Calu3 (cell line): ENCODE measurements at regions of chr3 and their contacts with region 1.

Region 1: GRCh38 chr3:24237971-24238767 is 256.5 kb downstream of the THRB start:
- DNase-seq: peak; percentile 70
- H3K4me3 Mint-ChIP-seq: no peak overlapping the region
- H3K27ac Mint-ChIP-seq: peak overlapping the region; percentile 0
- H3K4me1 Mint-ChIP-seq: peaks cover 35% of the 10 kb centered on the region
- H3K27me3 Mint-ChIP-seq: no peaks in the 10 kb centered on the region
- CTCF ChIP-seq: peak; percentile 58

Region 2: DNA sequence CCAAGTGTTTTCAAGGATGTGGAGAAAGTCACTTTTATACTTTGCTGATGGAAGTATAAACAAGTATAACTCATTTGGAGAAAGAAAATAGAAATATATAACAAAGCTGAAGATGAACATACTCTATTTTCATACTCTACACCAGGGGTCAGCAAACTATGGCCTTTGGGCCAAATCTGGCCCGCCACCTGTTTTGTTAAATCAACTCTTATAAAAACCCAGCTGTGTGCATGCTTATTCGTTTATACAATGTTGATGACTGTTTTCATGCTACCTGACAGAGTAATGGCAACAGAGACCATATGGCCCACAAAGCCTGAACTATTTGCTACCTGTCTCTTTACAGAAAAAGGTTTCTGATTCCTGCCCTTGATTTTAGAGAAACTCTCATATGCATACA is 169.1 kb before region 1 on chr3:
- CTCF ChIA-PET with region 1: no interaction called
- intact Hi-C with region 1: loop called (anchors 1 kb)
- DNase-seq: peak; percentile 12
- H3K4me3 Mint-ChIP-seq: no peak overlapping the region
- H3K27ac Mint-ChIP-seq: no peak overlapping the region
- H3K4me1 Mint-ChIP-seq: no peaks in the 10 kb centered on the region
- H3K27me3 Mint-ChIP-seq: no peaks in the 10 kb centered on the region
- CTCF ChIP-seq: no peak

Region 3: GRCh38 chr3:24154013-24154695 is 84.0 kb before region 1 on chr3:
- CTCF ChIA-PET with region 1: no interaction called
- intact Hi-C with region 1: no loop called
- DNase-seq: no peak
- H3K4me3 Mint-ChIP-seq: no peak overlapping the region
- H3K27ac Mint-ChIP-seq: no peak overlapping the region
- H3K4me1 Mint-ChIP-seq: peaks cover 36% of the 10 kb centered on the region
- H3K27me3 Mint-ChIP-seq: no peaks in the 10 kb centered on the region
- CTCF ChIP-seq: no peak